IMR-90 (cell line): ENCODE measurements at regions of chr21 and their contacts with region 1.

Region 1: GRCh38 chr21:41477641-41478318 is 30.2 kb downstream of the TMPRSS2 start:
- DNase-seq: no peak
- ATAC-seq: no peak
- H3K4me3 ChIP-seq: no peak overlapping the region
- H3K27ac ChIP-seq: no peak overlapping the region
- H3K4me1 ChIP-seq: no peaks in the 10 kb centered on the region
- H3K27me3 ChIP-seq: no peaks in the 10 kb centered on the region; the same call in 1 of the 2 replicates
- CTCF ChIP-seq: no peak
- POLR2A ChIP-seq: no peak
- RAD21 ChIP-seq: no peak

Region 2: GRCh38 chr21:42845296-42845965 is 1367.7 kb after region 1 on chr21:
- CTCF ChIA-PET with region 1: no interaction called
- POLR2A ChIA-PET with region 1: no interaction called
- dilution Hi-C with region 1: no loop called
- in situ Hi-C with region 1: no loop called
- intact Hi-C with region 1: loop called (anchors 10 kb)
- DNase-seq: no peak
- ATAC-seq: no peak
- H3K4me3 ChIP-seq: no peak overlapping the region
- H3K27ac ChIP-seq: no peak overlapping the region
- H3K4me1 ChIP-seq: no peaks in the 10 kb centered on the region
- H3K27me3 ChIP-seq: no peaks in the 10 kb centered on the region
- CTCF ChIP-seq: no peak
- POLR2A ChIP-seq: no peak
- RAD21 ChIP-seq: no peak